ENCODE measurements at regions of chr1 and their contacts with region 1.

Region 1: DNA sequence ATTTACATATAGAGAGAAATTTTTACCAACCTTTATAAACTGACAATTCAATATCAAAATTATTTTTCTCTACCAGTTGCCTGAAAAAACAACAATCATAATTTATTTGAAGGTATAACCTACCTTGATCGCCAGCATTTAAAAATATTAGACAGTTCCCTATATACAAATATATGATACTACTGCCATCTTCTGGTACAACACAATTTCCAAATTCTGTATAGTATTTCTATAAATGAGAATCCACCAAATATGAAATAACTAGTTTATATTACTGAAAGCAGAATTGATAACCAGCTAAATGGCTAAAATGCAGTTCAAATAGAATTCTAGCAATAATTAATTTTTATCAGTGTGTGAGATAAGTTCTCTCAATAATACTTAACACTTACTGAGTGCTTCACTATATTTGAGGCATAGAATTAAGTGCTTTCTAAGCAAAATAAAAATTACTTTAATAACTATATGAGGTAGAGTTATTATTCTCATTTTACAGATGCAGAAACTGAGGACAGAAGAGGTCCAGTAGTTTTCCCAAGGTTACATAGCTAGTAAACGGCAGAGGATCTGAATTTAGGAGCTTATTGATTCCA is 75.6 kb downstream of the PIGK start:
- DNase-seq: peak in 3 of 14 experiments; percentile 27 to 29 (median 28)
- ATAC-seq: no peak
- H3K4me3 ChIP-seq: no peak overlapping the region
- H3K4me3 Mint-ChIP-seq: no peak overlapping the region
- H3K27ac ChIP-seq: no peak overlapping the region
- H3K27ac Mint-ChIP-seq: no peak overlapping the region
- H3K4me1 ChIP-seq: no peaks in the 10 kb centered on the region
- H3K4me1 Mint-ChIP-seq: peaks cover 8% of the 10 kb centered on the region
- H3K27me3 ChIP-seq: no peaks in the 10 kb centered on the region
- H3K27me3 Mint-ChIP-seq: no peaks in the 10 kb centered on the region
- CTCF ChIP-seq: peak; percentile 53

Region 2: DNA sequence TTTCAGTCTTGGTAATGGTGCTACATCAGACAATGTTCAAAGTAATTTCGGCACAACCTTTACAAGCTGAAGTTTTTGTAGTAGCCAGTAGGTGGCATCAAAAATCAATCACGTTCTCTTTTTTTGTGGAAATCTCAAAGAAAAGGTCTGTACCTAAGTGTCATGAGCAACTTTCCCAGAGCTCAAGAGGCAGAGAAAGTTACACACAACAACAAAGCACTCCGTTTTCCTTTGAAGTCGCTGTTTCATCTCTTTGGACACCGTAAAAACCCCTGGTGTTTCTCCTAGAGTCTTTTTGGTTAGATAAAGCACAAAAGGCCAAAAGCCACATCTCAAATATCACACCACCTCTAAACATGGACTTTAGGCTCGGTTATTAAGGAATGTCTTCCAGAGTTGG is 1877.8 kb before region 1 on chr1:
- CTCF ChIA-PET with region 1: no interaction called
- POLR2A ChIA-PET with region 1: no interaction called
- intact Hi-C with region 1: loop called in 1 of 2 experiments (anchors 10 kb)
- DNase-seq: peak in 2 of 14 experiments; percentile 20 to 36
- ATAC-seq: no peak
- H3K4me3 ChIP-seq: no peak overlapping the region
- H3K4me3 Mint-ChIP-seq: no peak overlapping the region
- H3K27ac ChIP-seq: no peak overlapping the region
- H3K27ac Mint-ChIP-seq: no peak overlapping the region
- H3K4me1 ChIP-seq: no peaks in the 10 kb centered on the region
- H3K4me1 Mint-ChIP-seq: no peaks in the 10 kb centered on the region
- H3K27me3 ChIP-seq: no peaks in the 10 kb centered on the region
- H3K27me3 Mint-ChIP-seq: no peaks in the 10 kb centered on the region
- CTCF ChIP-seq: peak; percentile 14

Region 3: DNA sequence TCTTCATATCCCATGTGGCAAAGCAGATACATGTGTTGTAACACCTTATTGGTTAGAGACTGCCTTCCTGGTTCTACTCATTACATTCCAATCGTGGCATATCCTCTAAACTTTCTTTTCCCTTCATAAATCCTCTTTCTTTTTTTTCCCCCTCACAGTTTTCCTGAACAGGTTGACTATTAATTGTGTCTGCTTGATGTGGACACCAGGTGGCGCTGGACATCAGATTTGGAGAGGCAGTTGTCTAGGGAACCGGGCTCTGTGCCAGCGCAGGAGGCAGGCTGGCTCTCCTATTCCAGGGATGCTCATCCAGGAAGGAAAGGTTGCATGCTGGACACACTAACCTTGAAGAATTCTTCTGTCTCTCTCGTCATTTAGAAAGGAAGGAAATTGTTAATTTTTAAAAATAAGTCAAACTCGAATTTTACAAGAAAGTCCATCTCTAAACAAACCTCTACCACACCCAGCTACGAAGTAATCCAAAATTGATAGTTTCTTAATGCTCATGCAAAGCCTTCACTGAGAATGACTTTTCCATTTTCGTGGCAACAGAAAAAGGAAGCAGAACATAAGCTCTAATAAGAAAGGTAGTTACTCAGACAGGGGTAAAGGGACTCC is 1152.0 kb before region 1 on chr1:
- CTCF ChIA-PET with region 1: no interaction called
- POLR2A ChIA-PET with region 1: no interaction called
- intact Hi-C with region 1: loop called (anchors 1 to 5 kb)
- DNase-seq: peak; percentile 45 to 84 (median 64)
- ATAC-seq: peak; percentile 56
- H3K4me3 ChIP-seq: no peak overlapping the region
- H3K4me3 Mint-ChIP-seq: no peak overlapping the region
- H3K27ac ChIP-seq: no peak overlapping the region
- H3K27ac Mint-ChIP-seq: no peak overlapping the region
- H3K4me1 ChIP-seq: no peaks in the 10 kb centered on the region
- H3K4me1 Mint-ChIP-seq: no peaks in the 10 kb centered on the region
- H3K27me3 ChIP-seq: peaks cover 0 to 3% of the 10 kb centered on the region in 2 experiments
- H3K27me3 Mint-ChIP-seq: no peaks in the 10 kb centered on the region
- CTCF ChIP-seq: peak; percentile 83

Region 4: GRCh38 chr1:76330991-76331603 is 812.5 kb before region 1 on chr1:
- CTCF ChIA-PET with region 1: no interaction called
- POLR2A ChIA-PET with region 1: no interaction called
- intact Hi-C with region 1: loop called in 1 of 2 experiments (anchors 10 kb)
- DNase-seq: peak in 7 of 14 experiments; percentile 1 to 59 (median 43)
- ATAC-seq: peak; percentile 74
- H3K4me3 ChIP-seq: no peak overlapping the region
- H3K4me3 Mint-ChIP-seq: no peak overlapping the region
- H3K27ac ChIP-seq: no peak overlapping the region
- H3K27ac Mint-ChIP-seq: no peak overlapping the region
- H3K4me1 ChIP-seq: no peaks in the 10 kb centered on the region
- H3K4me1 Mint-ChIP-seq: peaks cover 25% of the 10 kb centered on the region
- H3K27me3 ChIP-seq: no peaks in the 10 kb centered on the region
- H3K27me3 Mint-ChIP-seq: no peaks in the 10 kb centered on the region
- CTCF ChIP-seq: peak; percentile 92

Region 5: DNA sequence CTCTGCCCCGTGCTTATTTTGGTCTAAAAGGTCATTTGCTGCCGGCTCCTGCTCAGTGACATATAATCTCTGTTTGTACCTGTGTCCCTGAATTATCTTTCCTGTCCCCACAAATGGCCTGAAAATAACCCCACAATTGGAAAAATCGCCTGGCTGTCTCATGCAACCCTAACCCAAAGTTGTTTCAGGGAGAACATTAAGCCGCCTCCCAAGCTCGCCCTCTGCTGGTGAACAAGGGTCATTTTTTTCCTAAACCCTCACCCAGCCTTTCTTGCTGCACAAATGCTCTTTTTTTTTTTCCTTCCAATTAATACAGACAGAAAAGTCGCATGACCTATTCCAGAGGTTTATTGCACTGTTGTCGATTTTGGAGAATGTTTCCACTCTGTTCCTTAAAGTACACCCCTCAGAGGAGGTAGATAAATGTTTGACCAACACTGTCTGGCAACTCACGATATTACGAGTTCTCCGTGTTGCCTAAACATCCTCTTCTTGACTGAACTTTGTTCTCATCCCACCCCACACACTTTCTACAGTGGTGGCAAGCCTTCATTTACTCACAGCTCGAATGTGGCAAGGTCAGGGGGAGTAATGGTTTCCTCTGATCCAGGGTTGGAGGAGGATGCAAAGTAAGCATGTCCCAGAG is 390.2 kb after region 1 on chr1:
- CTCF ChIA-PET with region 1: interaction called, 4 read pairs
- POLR2A ChIA-PET with region 1: no interaction called
- intact Hi-C with region 1: loop called (anchors 1 kb)
- DNase-seq: peak; percentile 37 to 80 (median 55)
- ATAC-seq: peak; percentile 66
- H3K4me3 ChIP-seq: no peak overlapping the region
- H3K4me3 Mint-ChIP-seq: peak overlapping the region; percentile 17
- H3K27ac ChIP-seq: no peak overlapping the region
- H3K27ac Mint-ChIP-seq: peak overlapping the region; percentile 13
- H3K4me1 ChIP-seq: peaks cover 13% of the 10 kb centered on the region
- H3K4me1 Mint-ChIP-seq: peaks cover 7% of the 10 kb centered on the region
- H3K27me3 ChIP-seq: no peaks in the 10 kb centered on the region
- H3K27me3 Mint-ChIP-seq: no peaks in the 10 kb centered on the region
- CTCF ChIP-seq: peak; percentile 91